ENCODE measurements at regions of chr5 and their contacts with region 1.

Region 1: GRCh38 chr5:174317259-174317894 is 271.9 kb downstream of the NSG2 start:
- DNase-seq: peak; percentile 70
- H3K4me3 Mint-ChIP-seq: no peak overlapping the region
- H3K27ac Mint-ChIP-seq: no peak overlapping the region
- H3K4me1 Mint-ChIP-seq: no peaks in the 10 kb centered on the region
- H3K27me3 Mint-ChIP-seq: peaks cover 71% of the 10 kb centered on the region
- CTCF ChIP-seq: peak; percentile 97

Region 2: GRCh38 chr5:173925448-173926071 is 391.8 kb before region 1 on chr5:
- CTCF ChIA-PET with region 1: interaction called, 10 read pairs
- POLR2A ChIA-PET with region 1: no interaction called
- intact Hi-C with region 1: no loop called
- DNase-seq: peak; percentile 77
- H3K4me3 Mint-ChIP-seq: no peak overlapping the region
- H3K27ac Mint-ChIP-seq: no peak overlapping the region
- H3K4me1 Mint-ChIP-seq: peaks cover 47% of the 10 kb centered on the region
- H3K27me3 Mint-ChIP-seq: no peaks in the 10 kb centered on the region
- CTCF ChIP-seq: peak; percentile 66

Region 3: GRCh38 chr5:174020397-174021296 is 296.7 kb before region 1 on chr5:
- CTCF ChIA-PET with region 1: interaction called, 3 read pairs
- POLR2A ChIA-PET with region 1: no interaction called
- intact Hi-C with region 1: loop called (anchors 1 kb)
- DNase-seq: peak; percentile 84
- H3K4me3 Mint-ChIP-seq: no peak overlapping the region
- H3K27ac Mint-ChIP-seq: no peak overlapping the region
- H3K4me1 Mint-ChIP-seq: peaks cover 8% of the 10 kb centered on the region
- H3K27me3 Mint-ChIP-seq: peaks cover 54% of the 10 kb centered on the region
- CTCF ChIP-seq: peak; percentile 73

Region 4: GRCh38 chr5:174053905-174054304 is 263.5 kb before region 1 on chr5:
- CTCF ChIA-PET with region 1: interaction called, 588 read pairs
- POLR2A ChIA-PET with region 1: no interaction called
- intact Hi-C with region 1: no loop called
- DNase-seq: no peak
- H3K4me3 Mint-ChIP-seq: no peak overlapping the region
- H3K27ac Mint-ChIP-seq: no peak overlapping the region
- H3K4me1 Mint-ChIP-seq: no peaks in the 10 kb centered on the region
- H3K27me3 Mint-ChIP-seq: peaks cover 34% of the 10 kb centered on the region
- CTCF ChIP-seq: no peak

Region 5: GRCh38 chr5:174327317-174328236 is 10.2 kb after region 1 on chr5:
- CTCF ChIA-PET with region 1: interaction called, 29 read pairs
- POLR2A ChIA-PET with region 1: no interaction called
- intact Hi-C with region 1: no loop called
- DNase-seq: peak; percentile 88
- H3K4me3 Mint-ChIP-seq: no peak overlapping the region
- H3K27ac Mint-ChIP-seq: peak overlapping the region; percentile 96
- H3K4me1 Mint-ChIP-seq: peaks cover 25% of the 10 kb centered on the region
- H3K27me3 Mint-ChIP-seq: peaks cover 25% of the 10 kb centered on the region
- CTCF ChIP-seq: peak; percentile 98